Activated CD4-positive, alpha-beta memory T cell treated with anti-CD3 and anti-CD28 coated beads for 36 hours (primary cell): ENCODE measurements at regions of chr6 and their contacts with region 1.

Region 1: DNA sequence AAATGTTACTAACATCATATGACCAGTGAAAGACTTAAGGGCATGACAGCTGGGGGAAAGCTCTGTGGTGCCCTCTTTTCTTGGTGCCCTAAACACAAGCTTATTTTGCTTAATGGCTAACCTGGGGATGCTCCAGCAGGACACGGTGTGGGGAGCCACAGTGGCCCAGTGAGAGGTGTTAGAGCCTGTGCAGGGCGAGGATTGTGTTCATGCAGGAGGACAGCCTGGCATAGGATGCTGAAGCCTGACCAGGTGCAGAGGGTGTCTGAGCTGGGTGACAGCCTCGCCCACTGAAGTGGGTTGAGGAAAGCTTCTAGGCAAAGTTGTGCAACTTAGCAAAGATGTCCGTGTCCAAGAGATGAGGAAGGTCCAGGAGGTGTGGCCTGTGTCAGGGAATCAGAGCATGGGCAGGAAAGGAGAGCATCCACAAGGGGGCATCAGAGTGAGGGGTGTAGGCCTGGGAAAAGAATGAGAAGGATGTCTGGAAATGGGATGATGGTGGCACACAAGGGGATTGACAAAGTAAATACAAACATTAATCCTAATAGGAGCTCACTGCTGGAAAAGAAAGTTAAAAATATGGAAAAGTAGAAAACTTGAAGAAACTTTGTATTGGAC is 33.9 kb downstream of the SLC17A4 start:
- DNase-seq: peak; percentile 63
- H3K4me3 Mint-ChIP-seq: no peak overlapping the region
- H3K27ac Mint-ChIP-seq: no peak overlapping the region
- H3K4me1 Mint-ChIP-seq: peaks cover 11% of the 10 kb centered on the region
- H3K27me3 Mint-ChIP-seq: no peaks in the 10 kb centered on the region

Region 2: GRCh38 chr6:25499615-25500235 is 288.7 kb before region 1 on chr6:
- CTCF ChIA-PET with region 1: no interaction called
- POLR2A ChIA-PET with region 1: no interaction called
- intact Hi-C with region 1: no loop called
- DNase-seq: no peak
- H3K4me3 Mint-ChIP-seq: no peak overlapping the region
- H3K27ac Mint-ChIP-seq: no peak overlapping the region
- H3K4me1 Mint-ChIP-seq: no peaks in the 10 kb centered on the region
- H3K27me3 Mint-ChIP-seq: no peaks in the 10 kb centered on the region

Region 3: DNA sequence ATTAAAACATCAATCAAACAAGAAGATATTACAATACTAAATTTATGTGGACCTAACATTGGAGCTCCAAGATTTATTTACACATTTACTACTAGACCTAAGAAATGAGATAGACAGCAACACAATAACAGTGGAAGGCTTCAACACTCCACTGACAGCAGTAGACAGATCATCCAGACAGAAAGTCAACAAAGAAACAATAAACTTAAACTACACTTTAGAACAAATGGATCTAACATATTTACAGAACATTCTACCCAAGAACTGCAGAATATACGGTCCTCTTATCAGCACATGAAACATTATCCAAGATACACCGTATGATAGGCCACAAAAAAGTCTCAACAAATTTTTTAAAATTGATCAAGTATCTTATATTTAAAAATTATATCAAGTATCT is 16.4 kb after region 1 on chr6:
- CTCF ChIA-PET with region 1: interaction called, 12 read pairs
- POLR2A ChIA-PET with region 1: no interaction called
- intact Hi-C with region 1: no loop called
- DNase-seq: no peak
- H3K4me3 Mint-ChIP-seq: no peak overlapping the region
- H3K27ac Mint-ChIP-seq: no peak overlapping the region
- H3K4me1 Mint-ChIP-seq: no peaks in the 10 kb centered on the region
- H3K27me3 Mint-ChIP-seq: peaks cover 25% of the 10 kb centered on the region

Region 4: DNA sequence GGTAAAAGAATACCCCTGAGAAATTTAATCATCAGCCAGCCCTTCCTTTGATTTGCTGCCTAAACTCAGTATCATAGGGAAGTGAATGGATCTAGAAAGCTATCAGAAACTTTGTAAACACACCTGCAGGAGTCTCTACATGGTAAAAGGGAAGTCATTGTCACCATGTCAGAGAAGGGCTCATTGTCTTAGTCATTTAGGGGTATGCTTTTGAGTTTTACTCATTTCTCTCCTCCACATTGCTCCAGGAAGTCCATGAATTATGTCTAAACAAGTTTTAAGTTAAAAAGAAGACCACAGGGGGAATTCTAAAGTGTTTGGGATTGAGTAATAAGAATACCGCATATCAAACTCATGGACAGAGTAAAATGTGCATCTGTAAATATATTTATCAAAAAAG is 41.0 kb after region 1 on chr6:
- CTCF ChIA-PET with region 1: interaction called, 5 read pairs
- POLR2A ChIA-PET with region 1: no interaction called
- intact Hi-C with region 1: loop called (anchors 5 kb)
- DNase-seq: no peak
- H3K4me3 Mint-ChIP-seq: no peak overlapping the region
- H3K27ac Mint-ChIP-seq: no peak overlapping the region
- H3K4me1 Mint-ChIP-seq: peaks cover 9% of the 10 kb centered on the region
- H3K27me3 Mint-ChIP-seq: peaks cover 26% of the 10 kb centered on the region

Region 5: GRCh38 chr6:25889877-25890853 is 101.8 kb after region 1 on chr6:
- CTCF ChIA-PET with region 1: interaction called, 6 read pairs
- POLR2A ChIA-PET with region 1: no interaction called
- intact Hi-C with region 1: loop called (anchors 5 kb)
- DNase-seq: peak; percentile 31
- H3K4me3 Mint-ChIP-seq: no peak overlapping the region
- H3K27ac Mint-ChIP-seq: no peak overlapping the region
- H3K4me1 Mint-ChIP-seq: no peaks in the 10 kb centered on the region
- H3K27me3 Mint-ChIP-seq: no peaks in the 10 kb centered on the region

Region 6: DNA sequence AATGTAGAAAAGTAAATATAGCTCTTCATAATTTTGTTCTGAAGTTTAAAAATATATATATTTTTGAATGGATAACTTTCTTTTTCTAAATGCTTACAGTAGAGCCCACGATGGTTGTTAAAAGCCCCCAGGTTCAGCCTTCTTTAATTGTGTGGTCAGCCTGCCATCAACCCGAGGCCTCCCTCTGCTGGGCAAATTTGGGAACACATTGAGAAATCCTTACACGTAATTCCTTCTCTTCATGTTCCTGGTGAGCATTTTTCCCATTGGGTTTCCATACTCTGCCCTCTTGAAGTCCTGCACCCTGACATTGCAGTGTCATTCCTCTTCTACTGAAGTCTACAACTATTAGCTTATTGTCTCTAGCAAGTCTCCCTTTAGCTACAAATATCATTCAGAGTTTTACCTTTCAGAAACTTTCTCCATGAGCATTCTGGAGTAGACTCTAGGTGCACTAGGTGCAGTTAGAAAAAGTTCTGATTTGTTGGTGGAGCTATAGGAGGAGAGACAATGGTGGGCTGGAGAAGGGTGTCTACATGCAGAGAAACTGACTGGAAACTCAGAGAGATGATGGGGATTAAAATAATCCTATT is 214.8 kb after region 1 on chr6:
- CTCF ChIA-PET with region 1: interaction called, 48 read pairs
- POLR2A ChIA-PET with region 1: no interaction called
- intact Hi-C with region 1: no loop called
- DNase-seq: peak; percentile 54
- H3K4me3 Mint-ChIP-seq: no peak overlapping the region
- H3K27ac Mint-ChIP-seq: no peak overlapping the region
- H3K4me1 Mint-ChIP-seq: peaks cover 4% of the 10 kb centered on the region
- H3K27me3 Mint-ChIP-seq: no peaks in the 10 kb centered on the region

Region 7: GRCh38 chr6:26025894-26026832 is 237.7 kb after region 1 on chr6:
- CTCF ChIA-PET with region 1: interaction called, 10 read pairs
- POLR2A ChIA-PET with region 1: no interaction called
- intact Hi-C with region 1: no loop called
- DNase-seq: peak; percentile 96
- H3K4me3 Mint-ChIP-seq: peak overlapping the region; percentile 87
- H3K27ac Mint-ChIP-seq: peak overlapping the region; percentile 91
- H3K4me1 Mint-ChIP-seq: peaks cover 53% of the 10 kb centered on the region
- H3K27me3 Mint-ChIP-seq: peaks cover 5% of the 10 kb centered on the region